ENCODE measurements at regions of chr15 and their contacts with region 1.

Region 1: DNA sequence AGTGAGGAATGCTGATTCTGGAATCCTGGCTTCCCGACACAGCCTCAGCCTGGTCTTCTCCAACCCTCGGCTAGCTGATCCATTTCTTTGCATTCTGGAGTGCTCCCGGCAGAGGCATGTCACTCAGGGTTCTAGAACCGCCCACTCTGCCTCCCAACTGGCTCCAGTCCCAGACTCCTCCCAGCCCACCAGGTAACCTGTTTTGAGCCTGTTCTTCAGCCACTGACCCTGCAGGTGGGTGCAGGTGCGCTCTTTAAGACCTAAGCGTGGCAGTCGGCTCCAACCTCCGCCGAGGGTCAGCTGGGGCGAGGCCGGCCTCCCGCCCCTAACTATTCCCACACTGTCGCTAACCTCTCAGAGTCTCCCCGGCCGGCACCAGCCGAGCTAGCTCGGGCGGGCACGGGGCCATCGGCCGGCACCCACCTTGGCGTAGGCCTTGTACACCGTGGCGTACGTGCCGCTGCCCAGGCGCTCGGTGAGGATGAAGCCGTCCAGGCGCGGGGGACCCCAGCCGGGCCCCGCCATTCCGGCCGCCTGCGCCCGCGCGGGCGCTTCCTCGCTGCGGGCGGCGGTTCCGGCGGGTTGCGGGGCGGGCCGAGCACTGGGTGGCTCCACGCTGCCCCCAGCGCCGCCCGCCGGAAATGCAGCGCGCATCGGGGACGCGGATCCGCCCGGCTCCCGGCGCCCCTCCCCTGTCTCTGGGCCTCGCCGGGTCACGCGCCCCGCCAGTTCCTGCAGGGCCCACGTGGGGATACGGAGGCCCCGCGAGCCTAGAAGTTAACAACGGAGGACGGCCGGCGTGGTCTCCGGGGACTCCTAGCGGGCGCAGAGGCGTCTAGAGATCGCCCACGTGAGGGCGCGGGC is at the start of gene ULK3:
- DNase-seq: peak; percentile 91
- H3K4me3 Mint-ChIP-seq: peak within 1 kb of the TSS; percentile 89
- H3K27ac Mint-ChIP-seq: peak within 1 kb of the TSS; percentile 92
- H3K4me1 Mint-ChIP-seq: peaks cover 38% of the 10 kb centered on the region
- H3K27me3 Mint-ChIP-seq: no peaks in the 10 kb centered on the region
- total RNA-seq, gene ULK3: 45.5 and 47.7 TPM in 2 replicates

Region 2: GRCh38 chr15:74768771-74769342 is 74.0 kb before region 1 on chr15:
- intact Hi-C with region 1: loop called (anchors 2 kb)
- DNase-seq: peak; percentile 45
- H3K4me3 Mint-ChIP-seq: no peak overlapping the region
- H3K27ac Mint-ChIP-seq: no peak overlapping the region
- H3K4me1 Mint-ChIP-seq: peaks cover 23% of the 10 kb centered on the region
- H3K27me3 Mint-ChIP-seq: no peaks in the 10 kb centered on the region

Region 3: GRCh38 chr15:74787251-74788041 is 55.4 kb before region 1 on chr15:
- intact Hi-C with region 1: loop called (anchors 2 kb)
- DNase-seq: peak; percentile 91
- H3K4me3 Mint-ChIP-seq: peak overlapping the region; percentile 92
- H3K27ac Mint-ChIP-seq: peak overlapping the region; percentile 97
- H3K4me1 Mint-ChIP-seq: peaks cover 65% of the 10 kb centered on the region
- H3K27me3 Mint-ChIP-seq: no peaks in the 10 kb centered on the region

Region 4: GRCh38 chr15:74889883-74890664 is 47.3 kb after region 1 on chr15 and contains the start of gene MPI:
- intact Hi-C with region 1: loop called (anchors 1 kb)
- DNase-seq: peak; percentile 82
- H3K4me3 Mint-ChIP-seq: peak within 1 kb of the TSS; percentile 82
- H3K27ac Mint-ChIP-seq: peak within 1 kb of the TSS; percentile 81
- H3K4me1 Mint-ChIP-seq: peaks cover 36% of the 10 kb centered on the region
- H3K27me3 Mint-ChIP-seq: no peaks in the 10 kb centered on the region
- total RNA-seq, gene MPI: 66.3 and 71.6 TPM in 2 replicates

Region 5: DNA sequence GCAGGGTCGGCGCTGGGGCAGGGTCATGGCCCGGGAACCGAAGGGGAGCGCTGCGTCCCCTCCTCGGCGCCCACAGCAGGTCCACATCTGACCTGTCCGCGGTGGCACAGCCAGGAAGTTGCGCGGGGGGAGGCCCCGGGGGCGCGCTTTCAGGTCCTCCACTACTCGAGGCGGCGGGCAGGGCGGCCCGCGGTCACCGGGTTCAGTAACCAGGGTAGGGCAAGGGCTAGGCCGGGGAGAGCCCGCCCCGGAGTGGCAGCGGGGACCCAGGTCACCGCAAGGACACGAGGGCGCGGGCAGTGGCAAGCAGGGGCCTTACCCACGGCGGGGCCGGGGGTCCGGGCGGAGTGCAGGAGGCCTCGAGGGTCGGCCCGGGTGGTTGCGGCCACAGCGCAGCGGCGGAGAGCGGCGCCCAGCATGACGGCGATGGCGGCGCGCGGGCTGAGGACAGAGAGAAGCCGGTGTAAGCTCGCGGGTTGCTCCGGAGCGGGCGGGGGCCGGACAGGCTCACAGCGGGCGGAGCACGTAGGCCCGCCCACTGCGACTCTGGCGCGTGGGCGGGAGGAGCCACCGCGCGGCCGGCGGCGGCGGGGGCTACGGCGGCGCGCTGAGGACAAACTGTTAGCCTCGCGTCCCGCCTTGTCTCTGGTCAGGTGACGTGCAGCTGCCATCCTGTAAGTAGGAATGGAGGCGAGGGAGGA is 94.9 kb after region 1 on chr15 and contains the start of gene COX5A:
- intact Hi-C with region 1: loop called (anchors 5 kb)
- DNase-seq: peak; percentile 92
- H3K4me3 Mint-ChIP-seq: peak within 1 kb of the TSS; percentile 85
- H3K27ac Mint-ChIP-seq: peak within 1 kb of the TSS; percentile 90
- H3K4me1 Mint-ChIP-seq: peaks cover 20% of the 10 kb centered on the region
- H3K27me3 Mint-ChIP-seq: no peaks in the 10 kb centered on the region
- total RNA-seq, gene COX5A: 311 and 333 TPM in 2 replicates